ENCODE measurements at regions of chr14 and their contacts with region 1.

Region 1: GRCh38 chr14:103628684-103629502 is at the start of gene KLC1:
- DNase-seq: peak; percentile 54
- ATAC-seq: peak; percentile 74
- H3K4me3 ChIP-seq: peak within 1 kb of the TSS; percentile 97
- H3K27ac ChIP-seq: peak within 1 kb of the TSS; percentile 98
- H3K4me1 ChIP-seq: peaks cover 15% of the 10 kb centered on the region
- H3K27me3 ChIP-seq: no peaks in the 10 kb centered on the region
- CTCF ChIP-seq: no peak
- POLR2A ChIP-seq: peak; percentile 79
- RAD21 ChIP-seq: no peak
- total RNA-seq, gene KLC1: 101 and 139 TPM in 2 replicates

Region 2: GRCh38 chr14:103552011-103552845 is 76.7 kb before region 1 on chr14:
- CTCF ChIA-PET with region 1: no interaction called
- POLR2A ChIA-PET with region 1: no interaction called
- dilution Hi-C with region 1: no loop called
- in situ Hi-C with region 1: no loop called
- intact Hi-C with region 1: no loop called
- DNase-seq: peak; percentile 49
- ATAC-seq: peak; percentile 57
- H3K4me3 ChIP-seq: no peak overlapping the region
- H3K27ac ChIP-seq: no peak overlapping the region
- H3K4me1 ChIP-seq: peaks cover 11% of the 10 kb centered on the region
- H3K27me3 ChIP-seq: no peaks in the 10 kb centered on the region
- CTCF ChIP-seq: no peak
- POLR2A ChIP-seq: no peak
- RAD21 ChIP-seq: no peak

Region 3: GRCh38 chr14:103594265-103594664 is 34.6 kb before region 1 on chr14:
- CTCF ChIA-PET with region 1: no interaction called
- POLR2A ChIA-PET with region 1: no interaction called
- dilution Hi-C with region 1: no loop called
- in situ Hi-C with region 1: no loop called
- intact Hi-C with region 1: loop called (anchors 2 kb)
- DNase-seq: peak; percentile 74
- ATAC-seq: peak; percentile 10; the same call in 1 of the 2 replicates
- H3K4me3 ChIP-seq: no peak overlapping the region
- H3K27ac ChIP-seq: 0 out of 2 replicates have a peak overlapping the region, but pooled peaks have one; percentile 2
- H3K4me1 ChIP-seq: peaks cover 14% of the 10 kb centered on the region
- H3K27me3 ChIP-seq: no peaks in the 10 kb centered on the region
- CTCF ChIP-seq: no peak
- POLR2A ChIP-seq: no peak
- RAD21 ChIP-seq: no peak

Region 4: DNA sequence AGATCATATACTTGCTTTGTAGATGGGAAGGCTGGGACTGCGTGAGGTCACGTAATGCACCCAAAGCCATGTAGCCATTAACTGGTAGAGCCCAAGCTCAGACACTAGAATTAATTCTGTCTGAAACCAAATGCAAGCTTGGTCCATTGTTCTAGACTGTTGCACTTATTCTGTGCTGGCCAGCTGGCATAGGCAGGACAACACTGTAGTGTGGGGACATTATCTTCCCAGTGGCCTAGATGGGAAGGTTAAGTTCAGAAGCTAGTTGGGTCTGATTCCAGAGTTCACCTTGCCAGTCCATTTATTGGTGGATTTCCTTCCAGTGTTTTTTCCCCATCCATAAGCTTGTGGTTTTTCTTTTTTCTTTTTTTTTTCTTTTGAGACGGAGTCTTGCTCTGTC is 39.2 kb after region 1 on chr14:
- CTCF ChIA-PET with region 1: interaction called, 11 read pairs
- POLR2A ChIA-PET with region 1: no interaction called
- dilution Hi-C with region 1: no loop called
- in situ Hi-C with region 1: no loop called
- intact Hi-C with region 1: no loop called
- DNase-seq: no peak
- ATAC-seq: no peak
- H3K4me3 ChIP-seq: no peak overlapping the region
- H3K27ac ChIP-seq: no peak overlapping the region
- H3K4me1 ChIP-seq: peaks cover 12% of the 10 kb centered on the region
- H3K27me3 ChIP-seq: no peaks in the 10 kb centered on the region
- CTCF ChIP-seq: no peak
- POLR2A ChIP-seq: no peak
- RAD21 ChIP-seq: no peak

Region 5: GRCh38 chr14:103880348-103881267 is 251.7 kb after region 1 on chr14:
- CTCF ChIA-PET with region 1: no interaction called
- POLR2A ChIA-PET with region 1: no interaction called
- dilution Hi-C with region 1: no loop called
- in situ Hi-C with region 1: no loop called
- intact Hi-C with region 1: no loop called
- DNase-seq: peak; percentile 51
- ATAC-seq: peak; percentile 65
- H3K4me3 ChIP-seq: no peak overlapping the region
- H3K27ac ChIP-seq: no peak overlapping the region
- H3K4me1 ChIP-seq: peaks cover 3% of the 10 kb centered on the region; the same call in 1 of the 2 replicates
- H3K27me3 ChIP-seq: peaks cover 19% of the 10 kb centered on the region; the same call in 1 of the 2 replicates
- CTCF ChIP-seq: no peak
- POLR2A ChIP-seq: no peak
- RAD21 ChIP-seq: no peak

Measured in IMR-90 (cell line).